ENCODE measurements at regions of chr1 and their contacts with region 1.

Region 1: DNA sequence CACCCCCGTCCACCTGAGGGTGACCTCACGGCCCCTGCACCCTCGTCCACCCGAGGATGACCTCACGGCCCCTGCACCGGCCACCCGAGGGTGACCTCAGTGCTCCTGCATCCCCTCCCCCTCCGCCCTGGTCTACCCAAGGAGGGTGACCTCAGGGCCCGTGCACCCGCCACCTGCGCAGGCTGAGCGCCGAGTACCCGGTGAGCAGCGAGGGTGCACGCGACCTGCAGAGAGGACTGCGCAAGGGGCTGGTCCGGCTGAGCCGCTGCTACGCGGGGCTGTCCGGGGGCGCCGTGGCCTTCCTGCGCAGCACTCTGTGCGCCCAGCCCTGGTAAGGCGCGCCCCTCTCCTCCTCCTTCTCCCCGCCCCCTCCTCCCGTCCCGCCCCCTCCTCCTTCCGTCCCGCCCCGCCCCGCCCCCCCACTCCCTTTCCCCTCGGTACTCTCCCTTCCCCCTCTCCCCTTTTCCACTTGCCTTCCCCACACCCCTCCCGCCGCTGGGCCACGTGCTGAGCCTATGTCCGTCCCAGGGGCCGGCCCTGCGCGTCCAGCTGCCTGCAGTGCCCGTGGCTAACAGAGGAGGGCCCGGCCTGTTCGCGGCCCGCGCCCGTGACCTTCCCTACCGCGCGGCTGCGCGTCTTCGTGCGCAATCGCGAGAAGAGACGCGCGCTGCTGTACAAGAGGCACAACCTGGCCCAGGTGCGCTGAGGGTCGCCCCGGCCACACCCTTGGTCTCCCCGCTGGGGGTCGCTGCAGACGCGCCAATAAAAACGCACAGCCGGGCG is 28.4 kb downstream of the TRIM11 start:
- DNase-seq: no peak
- H3K4me3 ChIP-seq: peak overlapping the region; percentile 52
- H3K27me3 ChIP-seq: no peaks in the 10 kb centered on the region
- CTCF ChIP-seq: peak; percentile 69

Region 2: GRCh38 chr1:228393248-228393699 is 15.0 kb after region 1 on chr1:
- CTCF ChIA-PET with region 1: interaction called, 11 read pairs
- POLR2A ChIA-PET with region 1: no interaction called
- DNase-seq: peak; percentile 26
- H3K4me3 ChIP-seq: no peak overlapping the region
- H3K27me3 ChIP-seq: no peaks in the 10 kb centered on the region
- CTCF ChIP-seq: peak; percentile 78

Region 3: DNA sequence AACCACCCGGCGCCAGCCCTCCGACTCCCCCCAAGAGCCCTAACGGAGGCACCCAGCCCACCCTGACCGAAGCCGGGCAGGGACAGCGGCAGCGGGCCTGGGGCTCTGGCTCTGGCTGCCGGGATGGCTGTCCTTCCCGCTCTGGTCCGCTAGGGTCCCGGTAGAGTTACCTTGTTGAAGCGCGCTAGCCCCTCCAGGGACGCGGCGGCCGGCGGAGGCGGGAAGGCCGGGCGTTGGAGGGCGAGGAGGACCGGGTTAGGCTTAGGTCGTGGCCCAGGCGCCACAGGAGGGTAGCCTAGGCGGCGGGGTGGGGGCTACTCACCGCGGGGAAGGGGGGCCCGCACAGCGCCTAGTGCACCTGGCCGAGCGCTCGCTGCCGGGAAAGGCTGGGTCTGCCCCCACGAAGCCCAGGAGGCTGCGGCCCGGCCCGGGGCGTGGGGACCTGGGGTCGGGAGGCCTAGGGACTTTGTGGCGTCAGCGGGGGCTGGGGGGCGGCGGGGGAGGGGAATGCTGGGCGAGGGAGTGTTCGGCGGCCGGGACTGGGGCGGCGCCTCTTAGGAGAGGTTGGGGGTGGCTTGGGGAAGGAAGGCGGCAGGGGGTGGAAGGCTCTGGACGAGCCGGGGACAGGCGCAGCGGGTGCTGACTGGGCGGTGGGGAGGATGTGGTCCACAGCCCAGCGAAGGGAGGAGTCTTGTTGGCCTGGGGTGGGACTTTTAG is 38.1 kb after region 1 on chr1 and contains the start of gene TRIM17:
- CTCF ChIA-PET with region 1: no interaction called
- POLR2A ChIA-PET with region 1: interaction called, 20 read pairs
- DNase-seq: no peak
- H3K4me3 ChIP-seq: peak within 1 kb of the TSS; percentile 50
- H3K27me3 ChIP-seq: no peaks in the 10 kb centered on the region
- CTCF ChIP-seq: peak; percentile 51
- polyA plus RNA-seq, gene TRIM17: 0.33 and 0.55 TPM in 2 replicates

Region 4: DNA sequence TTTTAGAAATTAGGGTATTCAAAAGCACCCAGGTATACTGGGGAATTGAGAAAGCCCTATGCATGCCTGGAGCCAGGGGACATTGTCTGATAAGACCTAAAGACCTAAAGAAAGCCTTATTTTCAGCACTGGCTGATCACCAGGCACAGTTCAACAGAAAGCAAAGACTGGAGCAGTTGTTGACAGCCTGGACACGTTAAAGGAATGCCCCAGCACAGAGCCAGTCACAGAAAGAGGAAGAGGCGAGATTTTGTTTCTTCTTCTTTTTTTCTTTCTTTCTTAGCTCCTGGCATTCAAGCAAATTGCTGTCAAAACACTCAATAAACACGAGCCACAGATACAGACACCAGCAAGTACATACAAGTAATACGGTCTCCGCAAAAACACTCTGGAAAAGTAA is 149.3 kb after region 1 on chr1:
- CTCF ChIA-PET with region 1: no interaction called
- POLR2A ChIA-PET with region 1: no interaction called
- DNase-seq: no peak
- H3K4me3 ChIP-seq: no peak overlapping the region
- H3K27me3 ChIP-seq: no peaks in the 10 kb centered on the region
- CTCF ChIP-seq: no peak

Measured in BJ (cell line).